Posterior vena cava (tissue), 2 donors: ENCODE measurements at regions of chr9 and their contacts with region 1.

Region 1: DNA sequence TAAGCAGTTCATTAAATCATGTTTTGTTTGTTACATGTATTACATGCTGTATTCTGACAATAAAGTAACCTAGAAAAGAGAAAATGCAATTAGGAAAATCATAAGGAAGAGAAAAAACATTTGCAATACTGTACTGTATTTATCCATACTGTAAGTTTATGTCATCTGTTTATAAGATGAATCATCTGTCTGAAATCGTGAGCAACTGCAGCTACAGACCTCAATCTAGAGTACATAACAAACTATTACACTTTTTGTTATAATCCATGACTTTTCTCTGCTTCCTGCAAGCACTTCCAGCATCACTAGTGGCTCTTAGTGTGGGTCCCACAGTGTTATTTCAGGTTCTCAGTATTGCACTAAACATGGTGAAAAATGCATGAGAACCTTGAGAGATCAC is 144.4 kb upstream of the NR4A3 start:
- DNase-seq: no peak

Region 2: GRCh38 chr9:99735041-99735440 is 57.8 kb after region 1 on chr9:
- intact Hi-C with region 1: loop called in 1 of 2 experiments (anchors 2 kb)
- DNase-seq: no peak